ENCODE measurements at regions of chr7 and their contacts with region 1.

Region 1: DNA sequence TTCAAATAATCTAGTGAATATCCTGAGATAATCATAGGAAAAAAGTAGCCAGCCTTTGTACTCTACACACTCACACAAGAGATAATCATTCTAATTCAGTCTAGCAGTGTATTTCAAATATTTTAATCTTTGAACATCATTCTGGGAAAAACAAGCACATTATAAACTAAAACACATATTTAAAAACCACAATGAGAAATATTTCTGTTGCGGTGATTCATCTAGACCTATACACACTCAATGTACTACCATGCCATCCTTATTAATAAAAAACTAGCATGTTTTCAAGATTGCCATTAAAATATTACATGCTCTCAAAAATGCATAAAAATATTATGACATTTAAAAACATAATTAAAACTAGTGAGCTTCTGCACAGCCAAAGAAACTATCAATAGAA is 11.8 kb downstream of the COG5 start:
- DNase-seq: no peak
- ATAC-seq: no peak
- H3K4me3 ChIP-seq: no peak overlapping the region
- H3K27ac ChIP-seq: no peak overlapping the region
- H3K4me1 ChIP-seq: no peaks in the 10 kb centered on the region
- H3K27me3 ChIP-seq: no peaks in the 10 kb centered on the region
- CTCF ChIP-seq: no peak

Region 2: GRCh38 chr7:107014387-107015023 is 537.4 kb before region 1 on chr7:
- CTCF ChIA-PET with region 1: no interaction called
- POLR2A ChIA-PET with region 1: no interaction called
- intact Hi-C with region 1: no loop called
- DNase-seq: no peak
- ATAC-seq: no peak
- H3K4me3 ChIP-seq: no peak overlapping the region
- H3K27ac ChIP-seq: no peak overlapping the region
- H3K4me1 ChIP-seq: no peaks in the 10 kb centered on the region
- H3K27me3 ChIP-seq: peaks cover 29% of the 10 kb centered on the region
- CTCF ChIP-seq: no peak

Region 3: GRCh38 chr7:107528466-107528865 is 23.5 kb before region 1 on chr7:
- CTCF ChIA-PET with region 1: no interaction called
- POLR2A ChIA-PET with region 1: no interaction called
- intact Hi-C with region 1: loop called (anchors 2 kb)
- DNase-seq: peak; percentile 57
- ATAC-seq: peak; percentile 79
- H3K4me3 ChIP-seq: no peak overlapping the region
- H3K27ac ChIP-seq: no peak overlapping the region
- H3K4me1 ChIP-seq: peaks cover 6% of the 10 kb centered on the region
- H3K27me3 ChIP-seq: no peaks in the 10 kb centered on the region
- CTCF ChIP-seq: no peak

Measured in PC-3 (cell line).